AG04450 (cell line): ENCODE measurements at regions of chr5 and their contacts with region 1.

Region 1: DNA sequence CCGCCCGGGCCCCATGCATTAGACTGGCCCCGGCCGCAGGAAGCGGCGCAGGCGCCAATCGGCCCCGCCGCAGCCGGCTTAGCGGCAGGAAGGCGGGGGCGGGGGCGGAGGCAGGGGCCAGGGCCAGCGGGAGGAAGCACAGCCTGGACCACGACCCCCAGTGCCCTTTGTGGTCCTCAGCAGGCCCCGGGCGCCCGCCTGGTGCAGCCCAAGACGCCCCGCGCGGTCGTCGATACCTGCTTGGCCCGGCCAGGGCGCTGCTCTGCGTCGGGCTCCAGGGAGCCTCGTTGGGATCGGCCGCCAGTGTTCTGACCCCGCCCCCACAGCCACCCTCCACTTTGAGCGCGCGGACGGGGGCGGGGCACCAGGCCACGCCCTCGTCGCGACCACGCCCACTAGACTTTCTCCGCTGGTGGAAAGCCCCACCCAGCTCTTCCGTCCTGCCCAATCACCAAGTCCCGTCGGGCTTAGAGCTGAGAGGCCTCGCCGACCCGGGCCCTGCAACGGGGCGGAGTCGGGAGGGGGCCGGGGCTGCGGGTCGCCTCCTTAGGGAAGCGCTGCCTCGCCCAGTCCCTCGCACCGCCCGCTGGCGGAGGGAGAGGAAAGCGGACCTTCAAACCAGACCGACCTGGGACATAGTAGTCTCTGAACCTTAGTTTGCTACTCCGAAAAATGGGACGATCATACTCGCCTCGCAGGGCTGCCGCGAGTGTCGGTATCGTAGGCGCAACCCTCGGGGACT is at the start of gene PDLIM7:
- DNase-seq: peak; percentile 95
- H3K4me3 ChIP-seq: peak within 1 kb of the TSS; percentile 95
- H3K27ac ChIP-seq: peak within 1 kb of the TSS; percentile 99
- H3K27me3 ChIP-seq: no peaks in the 10 kb centered on the region
- CTCF ChIP-seq: peak; percentile 15; the same call in 1 of the 2 replicates
- polyA plus RNA-seq, gene PDLIM7: 195 and 268 TPM in 2 replicates

Region 2: GRCh38 chr5:177309351-177310191 is 187.9 kb before region 1 on chr5:
- CTCF ChIA-PET with region 1: interaction called, 10 read pairs
- POLR2A ChIA-PET with region 1: interaction called, 3 read pairs
- DNase-seq: no peak
- H3K4me3 ChIP-seq: no peak overlapping the region
- H3K27ac ChIP-seq: no peak overlapping the region
- H3K27me3 ChIP-seq: no peaks in the 10 kb centered on the region
- CTCF ChIP-seq: peak; percentile 86

Region 3: GRCh38 chr5:177473461-177474001 is 23.9 kb before region 1 on chr5 and contains the start of gene DBN1:
- CTCF ChIA-PET with region 1: interaction called, 11 read pairs
- POLR2A ChIA-PET with region 1: interaction called, 230 read pairs
- DNase-seq: no peak
- H3K4me3 ChIP-seq: peak within 1 kb of the TSS; percentile 92
- H3K27ac ChIP-seq: peak within 1 kb of the TSS; percentile 68
- H3K27me3 ChIP-seq: no peaks in the 10 kb centered on the region
- CTCF ChIP-seq: no peak
- polyA plus RNA-seq, gene DBN1: 146 and 164 TPM in 2 replicates

Region 4: GRCh38 chr5:177516604-177517568 is 19.4 kb after region 1 on chr5 and contains the start of gene DDX41:
- CTCF ChIA-PET with region 1: interaction called, 40 read pairs
- POLR2A ChIA-PET with region 1: interaction called, 20 read pairs
- DNase-seq: peak; percentile 98
- H3K4me3 ChIP-seq: peak within 1 kb of the TSS; percentile 97
- H3K27ac ChIP-seq: peak within 1 kb of the TSS; percentile 85
- H3K27me3 ChIP-seq: no peaks in the 10 kb centered on the region
- CTCF ChIP-seq: 0 out of 2 replicates have a peak, but pooled peaks have one; percentile 11
- polyA plus RNA-seq, gene DDX41: 71.8 and 96.0 TPM in 2 replicates

Region 5: GRCh38 chr5:177546258-177546741 is 48.8 kb after region 1 on chr5:
- CTCF ChIA-PET with region 1: interaction called, 22 read pairs
- POLR2A ChIA-PET with region 1: interaction called, 18 read pairs
- DNase-seq: peak; percentile 95
- H3K4me3 ChIP-seq: no peak overlapping the region
- H3K27ac ChIP-seq: peak overlapping the region; percentile 97
- H3K27me3 ChIP-seq: no peaks in the 10 kb centered on the region
- CTCF ChIP-seq: peak; percentile 14; the same call in 1 of the 2 replicates